A549 (cell line): ENCODE measurements at regions of chr12 and their contacts with region 1.

Region 1: DNA sequence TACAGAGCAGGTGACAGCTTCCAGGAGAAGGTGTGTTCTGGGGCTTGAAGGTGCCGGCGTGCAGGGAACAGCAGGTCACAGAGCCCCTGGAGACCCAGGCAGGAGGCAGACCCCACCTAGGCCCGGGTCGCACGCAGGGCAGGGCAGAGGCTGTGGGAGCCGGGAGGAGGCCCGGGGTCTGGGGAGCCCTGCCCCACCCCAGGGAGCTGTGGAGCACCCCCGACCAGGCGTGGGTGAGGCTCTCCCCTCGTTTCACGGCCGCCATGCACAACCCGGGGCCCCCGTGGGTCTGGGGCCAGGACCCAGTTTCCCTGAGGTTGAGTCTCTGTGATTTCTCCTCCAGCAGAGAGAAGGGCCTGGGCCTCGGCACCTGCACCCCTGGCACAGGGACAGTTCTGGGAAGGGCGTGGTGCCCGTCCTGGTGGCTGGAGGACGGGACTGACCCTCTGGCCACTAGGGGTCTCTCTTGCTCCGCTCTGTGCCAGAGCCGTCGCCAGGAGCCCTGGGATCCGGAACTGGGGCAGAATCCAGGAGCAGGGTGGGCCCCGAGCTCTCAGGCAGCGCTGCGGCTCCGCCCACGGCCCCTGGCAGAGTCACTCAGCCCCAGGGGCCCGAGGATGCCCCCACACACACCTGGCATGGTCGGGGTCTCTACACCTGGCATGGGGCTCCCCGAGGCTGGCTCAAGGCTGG is 75.2 kb upstream of the FBRSL1 start:
- DNase-seq: peak; percentile 80 to 88
- ATAC-seq: peak; percentile 87 to 98
- H3K4me3 ChIP-seq: no peak overlapping the region
- H3K27ac ChIP-seq: peak overlapping the region; percentile 65 to 85; a peak in 5 of 6 replicates
- H3K4me1 ChIP-seq: peaks cover 12% of the 10 kb centered on the region; the same call in 2 of the 3 replicates
- CTCF ChIP-seq: peak; percentile 94
- EP300 ChIP-seq: no peak
- POLR2A ChIP-seq: no peak
- RAD21 ChIP-seq: peak; percentile 98 to 99

Region 2: GRCh38 chr12:132143336-132144071 is 271.3 kb before region 1 on chr12:
- CTCF ChIA-PET with region 1: interaction called, 29 read pairs
- POLR2A ChIA-PET with region 1: no interaction called
- DNase-seq: no peak
- ATAC-seq: peak; percentile 4 to 12; a peak in 4 of 6 replicates
- H3K4me3 ChIP-seq: peak overlapping the region; percentile 99
- H3K27ac ChIP-seq: peak overlapping the region; percentile 94 to 98
- H3K4me1 ChIP-seq: peaks cover 16% of the 10 kb centered on the region; the same call in 2 of the 3 replicates
- CTCF ChIP-seq: no peak
- EP300 ChIP-seq: no peak
- POLR2A ChIP-seq: no peak
- RAD21 ChIP-seq: no peak

Region 3: DNA sequence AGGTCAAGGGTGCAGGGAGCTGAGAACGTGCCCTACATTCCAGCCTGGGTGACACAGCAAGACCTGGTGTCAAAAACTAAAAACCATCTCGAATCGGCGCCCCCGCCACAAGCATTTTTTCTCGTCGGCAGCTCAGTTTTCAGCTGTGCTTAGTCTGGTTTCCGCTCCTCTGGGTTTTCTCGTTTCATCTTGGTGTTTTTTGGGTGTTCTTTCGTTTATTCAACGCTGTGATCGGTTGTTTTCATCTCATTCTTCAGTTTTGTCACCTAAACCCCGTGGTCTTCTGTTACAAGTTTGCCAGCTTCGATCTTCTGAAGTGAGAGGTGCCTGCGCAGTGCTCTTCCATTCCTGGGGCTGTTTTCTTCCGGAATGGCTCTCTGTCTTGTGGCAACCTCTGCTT is 229.1 kb before region 1 on chr12:
- CTCF ChIA-PET with region 1: interaction called, 12 read pairs
- POLR2A ChIA-PET with region 1: no interaction called
- DNase-seq: no peak
- ATAC-seq: no peak
- H3K4me3 ChIP-seq: no peak overlapping the region
- H3K27ac ChIP-seq: no peak overlapping the region
- H3K4me1 ChIP-seq: peaks cover 12% of the 10 kb centered on the region; the same call in 2 of the 3 replicates
- CTCF ChIP-seq: no peak
- EP300 ChIP-seq: no peak
- POLR2A ChIP-seq: no peak
- RAD21 ChIP-seq: no peak

Region 4: GRCh38 chr12:132352896-132353800 is 61.6 kb before region 1 on chr12:
- CTCF ChIA-PET with region 1: interaction called, 19 read pairs
- POLR2A ChIA-PET with region 1: no interaction called
- DNase-seq: no peak
- ATAC-seq: no peak
- H3K4me3 ChIP-seq: no peak overlapping the region
- H3K27ac ChIP-seq: no peak overlapping the region
- H3K4me1 ChIP-seq: peaks cover 9% of the 10 kb centered on the region; the same call in 2 of the 3 replicates
- CTCF ChIP-seq: no peak
- EP300 ChIP-seq: no peak
- POLR2A ChIP-seq: no peak
- RAD21 ChIP-seq: no peak

Region 5: GRCh38 chr12:132460571-132460970 is 45.8 kb after region 1 on chr12:
- CTCF ChIA-PET with region 1: interaction called, 14 read pairs
- POLR2A ChIA-PET with region 1: no interaction called
- DNase-seq: peak in 1 of 2 experiments; percentile 58
- ATAC-seq: peak in 1 of 2 experiments; percentile 58; a peak in 3 of 6 replicates
- H3K4me3 ChIP-seq: no peak overlapping the region
- H3K27ac ChIP-seq: no peak overlapping the region
- H3K4me1 ChIP-seq: no peaks in the 10 kb centered on the region
- CTCF ChIP-seq: no peak; the same call in 2 of the 3 replicates
- EP300 ChIP-seq: no peak
- POLR2A ChIP-seq: no peak
- RAD21 ChIP-seq: peak in 1 of 2 experiments; percentile 56; a peak in 1 of 5 replicates

Region 6: DNA sequence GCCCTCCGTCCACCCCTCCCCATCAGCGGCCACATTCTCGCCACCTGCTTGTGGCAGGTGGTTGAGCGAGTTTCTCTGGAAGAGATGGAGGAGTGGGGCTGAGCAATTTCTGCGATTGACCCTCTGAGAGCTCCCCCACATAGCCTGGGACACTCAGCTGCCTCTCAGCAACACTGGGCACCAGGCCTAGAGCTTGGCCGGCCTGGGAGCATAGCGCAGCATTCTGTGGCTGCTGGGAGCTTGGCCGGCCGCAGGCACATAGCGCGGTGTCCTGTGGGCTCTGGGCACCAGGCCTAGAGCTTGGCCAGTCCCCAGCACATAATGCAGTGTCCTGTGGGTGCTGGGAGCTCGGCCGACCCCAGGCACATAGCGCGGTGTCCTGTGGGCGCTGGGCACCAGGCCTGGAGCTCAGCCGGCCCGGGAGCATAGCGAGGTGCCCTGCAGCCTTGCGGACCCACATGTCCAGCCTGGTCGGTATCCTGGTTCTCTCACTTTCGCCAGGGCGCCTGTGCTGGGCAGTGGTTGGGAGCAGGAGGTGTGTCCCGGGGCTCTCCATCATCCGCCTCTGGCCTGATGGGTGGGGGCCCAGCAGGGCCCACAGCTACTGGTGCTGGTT is 151.8 kb after region 1 on chr12:
- CTCF ChIA-PET with region 1: interaction called, 108 read pairs
- POLR2A ChIA-PET with region 1: no interaction called
- DNase-seq: no peak
- ATAC-seq: no peak
- H3K4me3 ChIP-seq: no peak overlapping the region
- H3K27ac ChIP-seq: no peak overlapping the region
- H3K4me1 ChIP-seq: peaks cover 1% of the 10 kb centered on the region; the same call in 1 of the 3 replicates
- CTCF ChIP-seq: no peak
- EP300 ChIP-seq: no peak
- POLR2A ChIP-seq: no peak
- RAD21 ChIP-seq: no peak

Region 7: GRCh38 chr12:132614861-132615578 is 200.2 kb after region 1 on chr12:
- CTCF ChIA-PET with region 1: interaction called, 132 read pairs
- POLR2A ChIA-PET with region 1: no interaction called
- DNase-seq: peak; percentile 80 to 89
- ATAC-seq: peak; percentile 78 to 89
- H3K4me3 ChIP-seq: no peak overlapping the region
- H3K27ac ChIP-seq: no peak overlapping the region
- H3K4me1 ChIP-seq: peaks cover 10% of the 10 kb centered on the region
- CTCF ChIP-seq: peak; percentile 94
- EP300 ChIP-seq: no peak
- POLR2A ChIP-seq: no peak
- RAD21 ChIP-seq: peak; percentile 85 to 92